Activated B cell treated with CpG ODN at 0.5 μM for 24 hours (primary cell): ENCODE measurements at regions of chr13 and their contacts with region 1.

Region 1: GRCh38 chr13:81017513-81018152 is 676.7 kb upstream of the SPRY2 start:
- DNase-seq: no peak
- ATAC-seq: no peak
- H3K4me3 Mint-ChIP-seq: no peak overlapping the region
- H3K27ac Mint-ChIP-seq: no peak overlapping the region
- H3K4me1 Mint-ChIP-seq: no peaks in the 10 kb centered on the region
- H3K27me3 Mint-ChIP-seq: no peaks in the 10 kb centered on the region
- CTCF ChIP-seq: no peak

Region 2: DNA sequence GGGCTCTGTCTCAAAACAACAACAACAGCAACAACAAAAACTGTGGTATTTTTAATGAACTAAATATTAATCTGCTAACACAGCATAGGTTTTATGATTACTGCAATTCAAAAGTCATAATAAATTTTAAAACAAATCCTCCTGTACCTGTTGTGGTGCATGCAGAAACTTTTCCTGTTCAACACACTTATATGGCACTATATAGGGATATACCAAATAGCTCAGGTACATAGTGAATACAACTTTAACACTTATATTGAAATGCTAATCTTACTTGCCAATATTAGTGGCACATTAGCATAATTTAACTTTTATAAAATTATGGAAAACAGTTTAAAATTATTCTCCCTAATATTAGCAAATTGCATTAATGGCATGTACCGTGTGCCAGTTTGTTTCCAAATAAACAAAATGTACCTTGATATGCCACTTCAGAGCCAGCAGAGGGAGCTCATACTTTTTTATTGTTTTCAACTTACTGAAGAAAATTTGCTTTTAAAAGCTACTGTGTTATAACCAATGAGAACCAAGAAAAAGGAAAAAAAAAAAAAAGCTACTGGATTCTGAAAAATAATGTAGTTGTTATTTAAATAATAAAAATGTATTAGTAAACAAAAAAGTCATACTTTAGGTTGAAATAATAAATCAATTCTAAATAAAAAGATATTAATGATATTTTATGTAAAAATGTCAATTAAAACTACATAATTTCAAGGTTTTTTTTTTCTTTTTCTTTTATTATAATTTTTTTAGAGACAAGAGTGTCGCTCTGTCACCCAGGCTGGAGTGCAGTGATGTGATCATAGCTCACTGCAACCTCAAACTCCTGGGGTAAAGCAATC is 1593.6 kb before region 1 on chr13:
- CTCF ChIA-PET with region 1: interaction called, 3 read pairs
- POLR2A ChIA-PET with region 1: no interaction called
- intact Hi-C with region 1: loop called (anchors 5 kb)
- DNase-seq: no peak
- ATAC-seq: peak; percentile 52
- H3K4me3 Mint-ChIP-seq: no peak overlapping the region
- H3K27ac Mint-ChIP-seq: no peak overlapping the region
- H3K4me1 Mint-ChIP-seq: no peaks in the 10 kb centered on the region
- H3K27me3 Mint-ChIP-seq: no peaks in the 10 kb centered on the region
- CTCF ChIP-seq: no peak

Region 3: GRCh38 chr13:79679334-79679733 is 1338.3 kb before region 1 on chr13:
- CTCF ChIA-PET with region 1: interaction called, 37 read pairs
- POLR2A ChIA-PET with region 1: no interaction called
- intact Hi-C with region 1: no loop called
- DNase-seq: no peak
- ATAC-seq: no peak
- H3K4me3 Mint-ChIP-seq: no peak overlapping the region
- H3K27ac Mint-ChIP-seq: no peak overlapping the region
- H3K4me1 Mint-ChIP-seq: no peaks in the 10 kb centered on the region
- H3K27me3 Mint-ChIP-seq: no peaks in the 10 kb centered on the region
- CTCF ChIP-seq: peak; percentile 52

Region 4: DNA sequence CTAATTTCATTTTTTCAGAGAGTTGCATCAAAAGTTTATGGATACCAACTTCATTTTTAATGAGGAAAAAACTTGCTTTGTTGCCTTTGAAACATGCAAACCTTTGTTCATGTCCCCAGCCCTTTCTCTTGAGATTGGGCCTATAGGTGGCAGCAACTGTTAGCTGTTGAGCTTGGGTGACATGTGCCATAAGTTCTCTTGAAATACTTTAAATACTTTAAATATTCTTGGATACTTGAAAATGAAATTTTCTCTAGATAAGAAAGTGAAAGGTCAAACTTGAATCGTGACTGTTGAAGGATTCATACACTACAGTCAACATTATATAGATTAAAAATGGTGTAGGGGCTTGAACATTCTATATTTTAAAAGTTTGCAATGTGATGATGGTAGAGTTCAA is 1241.8 kb before region 1 on chr13:
- CTCF ChIA-PET with region 1: no interaction called
- POLR2A ChIA-PET with region 1: no interaction called
- intact Hi-C with region 1: loop called (anchors 1 kb)
- DNase-seq: no peak
- ATAC-seq: no peak
- H3K4me3 Mint-ChIP-seq: no peak overlapping the region
- H3K27ac Mint-ChIP-seq: no peak overlapping the region
- H3K4me1 Mint-ChIP-seq: no peaks in the 10 kb centered on the region
- H3K27me3 Mint-ChIP-seq: peaks cover 2% of the 10 kb centered on the region
- CTCF ChIP-seq: no peak

Region 5: GRCh38 chr13:80363890-80364503 is 653.6 kb before region 1 on chr13:
- CTCF ChIA-PET with region 1: no interaction called
- POLR2A ChIA-PET with region 1: no interaction called
- intact Hi-C with region 1: loop called (anchors 5 kb)
- DNase-seq: no peak
- ATAC-seq: no peak
- H3K4me3 Mint-ChIP-seq: no peak overlapping the region
- H3K27ac Mint-ChIP-seq: no peak overlapping the region
- H3K4me1 Mint-ChIP-seq: peaks cover 2% of the 10 kb centered on the region
- H3K27me3 Mint-ChIP-seq: no peaks in the 10 kb centered on the region
- CTCF ChIP-seq: no peak

Region 6: GRCh38 chr13:80630685-80631121 is 386.9 kb before region 1 on chr13:
- CTCF ChIA-PET with region 1: no interaction called
- POLR2A ChIA-PET with region 1: no interaction called
- intact Hi-C with region 1: no loop called
- DNase-seq: no peak
- ATAC-seq: no peak
- H3K4me3 Mint-ChIP-seq: no peak overlapping the region
- H3K27ac Mint-ChIP-seq: no peak overlapping the region
- H3K4me1 Mint-ChIP-seq: no peaks in the 10 kb centered on the region
- H3K27me3 Mint-ChIP-seq: no peaks in the 10 kb centered on the region
- CTCF ChIP-seq: no peak

Region 7: GRCh38 chr13:80979035-80979641 is 38.5 kb before region 1 on chr13:
- CTCF ChIA-PET with region 1: interaction called, 3 read pairs
- POLR2A ChIA-PET with region 1: no interaction called
- intact Hi-C with region 1: loop called (anchors 1 kb)
- DNase-seq: no peak
- ATAC-seq: no peak
- H3K4me3 Mint-ChIP-seq: no peak overlapping the region
- H3K27ac Mint-ChIP-seq: no peak overlapping the region
- H3K4me1 Mint-ChIP-seq: no peaks in the 10 kb centered on the region
- H3K27me3 Mint-ChIP-seq: no peaks in the 10 kb centered on the region
- CTCF ChIP-seq: no peak

Region 8: GRCh38 chr13:82688400-82688994 is 1670.9 kb after region 1 on chr13:
- CTCF ChIA-PET with region 1: no interaction called
- POLR2A ChIA-PET with region 1: no interaction called
- intact Hi-C with region 1: no loop called
- DNase-seq: no peak
- ATAC-seq: no peak
- H3K4me3 Mint-ChIP-seq: peak overlapping the region; percentile 39
- H3K27ac Mint-ChIP-seq: no peak overlapping the region
- H3K4me1 Mint-ChIP-seq: peaks cover 13% of the 10 kb centered on the region
- H3K27me3 Mint-ChIP-seq: no peaks in the 10 kb centered on the region
- CTCF ChIP-seq: no peak